Dorsolateral prefrontal cortex (tissue), 120 donors: ENCODE measurements at regions of chr1 and their contacts with region 1.

Region 1: DNA sequence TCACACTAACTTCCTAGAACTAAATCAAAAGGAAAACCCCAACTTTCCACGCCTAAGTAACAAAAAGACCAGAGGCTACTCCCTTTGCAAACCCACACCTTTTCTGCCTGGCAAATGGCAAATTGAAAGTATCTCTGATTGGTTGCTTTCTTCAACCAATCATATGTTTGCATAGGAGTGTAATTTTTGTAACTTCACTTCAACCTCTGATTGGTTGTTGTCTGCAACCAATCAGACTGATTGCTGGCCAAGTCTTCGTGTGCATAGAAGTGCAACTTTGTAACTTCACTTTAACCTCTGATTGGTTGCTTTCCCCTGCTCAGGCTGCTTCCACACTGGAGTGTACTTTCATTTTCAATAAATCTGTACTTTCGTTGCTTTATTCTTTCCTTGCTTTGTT is 36.9 kb upstream of the PADI2 start:
- DNase-seq: no peak
- H3K4me3 ChIP-seq: no peak overlapping the region
- H3K27ac ChIP-seq: no peak overlapping the region
- H3K27me3 ChIP-seq: peaks cover 0 to 26% (median 7%) of the 10 kb centered on the region in 45 donors
- CTCF ChIP-seq: no peak

Region 2: DNA sequence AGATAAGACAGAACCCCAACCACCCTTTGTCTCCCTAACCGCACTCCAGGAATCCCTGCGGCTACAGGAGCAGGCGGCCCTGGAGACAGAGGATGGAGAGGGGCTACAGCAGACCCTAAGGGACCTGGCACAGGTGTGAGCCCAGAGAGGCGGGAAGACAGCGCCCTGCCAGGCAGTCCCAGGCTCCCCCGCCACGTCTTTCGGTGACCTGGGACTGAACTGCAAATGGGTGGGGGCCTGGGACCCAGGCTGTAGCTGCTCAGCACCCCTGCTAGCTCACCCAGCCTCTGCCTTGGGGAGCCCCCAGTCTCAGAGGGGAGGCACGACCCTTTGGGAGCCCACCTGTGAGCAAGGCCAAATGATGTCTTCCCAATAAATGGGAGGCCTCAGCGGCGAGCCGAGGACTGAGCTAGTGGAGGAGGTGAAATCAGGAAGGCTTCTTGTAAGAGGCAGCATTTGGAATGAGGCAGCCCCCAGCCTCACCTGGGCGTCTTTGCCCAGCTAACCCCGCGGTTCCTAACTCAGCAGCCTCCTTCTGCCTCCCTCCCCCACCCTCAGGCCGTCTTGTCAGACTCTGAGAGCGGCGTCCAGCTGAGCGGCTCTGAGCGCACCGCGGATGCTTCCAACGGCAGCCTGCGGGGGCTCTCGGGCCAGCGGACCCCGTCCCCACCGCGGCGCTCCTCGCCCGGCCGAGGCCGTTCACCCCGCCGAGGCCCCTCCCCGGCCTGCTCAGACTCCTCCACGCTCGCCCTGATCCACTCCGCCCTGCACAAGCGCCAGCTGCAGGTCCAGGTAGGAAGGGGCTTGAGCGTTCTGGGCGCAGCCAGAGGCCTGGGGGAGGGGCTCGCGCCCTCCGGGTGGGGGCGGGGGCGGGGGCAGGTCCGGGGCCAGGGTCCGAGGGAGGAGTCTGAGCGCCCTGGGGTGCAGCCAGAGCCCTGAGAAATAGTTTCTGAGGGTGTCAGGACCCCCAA is 217.5 kb before region 1 on chr1:
- intact Hi-C with region 1: no loop called
- DNase-seq: no peak
- H3K4me3 ChIP-seq: no peak overlapping the region
- H3K27ac ChIP-seq: no peak overlapping the region
- H3K27me3 ChIP-seq: no peaks in the 10 kb centered on the region
- CTCF ChIP-seq: no peak

Region 3: DNA sequence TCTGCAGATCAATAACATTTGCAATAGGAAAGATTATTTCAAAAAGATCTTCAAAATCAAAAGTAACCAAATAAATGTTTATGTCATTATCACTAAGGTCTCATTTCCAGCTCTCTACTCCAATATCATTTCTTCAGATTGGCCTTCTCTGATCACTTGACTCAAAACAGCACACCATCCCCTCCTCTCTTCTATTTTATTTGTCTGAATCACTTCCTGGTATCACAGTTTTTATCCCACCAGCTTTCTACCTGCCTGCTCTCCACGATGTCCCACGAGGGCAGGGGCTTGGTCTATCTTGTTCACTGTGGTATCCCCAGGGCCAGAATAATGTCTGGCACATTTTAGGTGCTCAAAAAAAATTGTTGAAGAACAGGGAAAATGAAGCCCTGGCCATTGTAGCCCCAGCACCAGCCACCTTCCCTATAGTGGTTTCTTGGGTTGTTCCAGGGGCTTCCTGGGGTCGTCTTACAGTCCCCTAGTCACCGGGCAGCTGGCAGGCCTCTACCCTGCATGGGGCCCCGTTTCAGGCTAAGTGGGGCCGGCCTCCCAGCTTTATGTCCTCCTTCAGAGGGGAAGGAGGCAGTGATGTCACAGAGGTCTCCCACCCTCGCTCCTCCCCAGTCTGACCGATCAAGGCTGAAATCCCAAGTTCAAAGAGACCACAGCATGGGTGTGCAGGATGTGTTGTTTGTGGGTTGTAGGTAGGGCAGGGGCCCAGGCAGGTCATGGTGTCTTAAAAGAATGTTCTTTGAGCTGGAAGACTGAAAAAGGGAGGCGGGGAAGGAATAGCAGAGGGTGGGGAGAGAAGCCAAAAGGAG is 45.3 kb after region 1 on chr1:
- intact Hi-C with region 1: loop called in 1 of 2 experiments (anchors 5 kb)
- DNase-seq: peak in 5 of 10 donors; percentile 2 to 28 (median 6)
- H3K4me3 ChIP-seq: no peak overlapping the region
- H3K27ac ChIP-seq: no peak overlapping the region
- H3K27me3 ChIP-seq: peaks cover 0 to 13% (median 0%) of the 10 kb centered on the region in 45 donors
- CTCF ChIP-seq: no peak

Region 4: GRCh38 chr1:17439250-17440073 is 283.4 kb after region 1 on chr1 and contains the start of gene RCC2:
- intact Hi-C with region 1: no loop called
- DNase-seq: peak; percentile 36 to 82 (median 57)
- H3K4me3 ChIP-seq: peak within 1 kb of the TSS; percentile 61 to 87 (median 75)
- H3K27ac ChIP-seq: peak within 1 kb of the TSS; percentile 6 to 95 (median 84)
- H3K27me3 ChIP-seq: no peaks in the 10 kb centered on the region
- CTCF ChIP-seq: peak in 11 of 56 donors; percentile 3 to 27 (median 12)
- total RNA-seq, gene RCC2: 22.3 to 50.7 (median 35.3) TPM